B cell (primary cell): ENCODE measurements at regions of chr2 and their contacts with region 1.

Region 1: GRCh38 chr2:33529771-33530351 is 53.4 kb downstream of the RASGRP3 start:
- DNase-seq: peak; percentile 36
- ATAC-seq: peak; percentile 37
- H3K4me3 ChIP-seq: peak overlapping the region in 1 of 5 experiments; percentile 56
- H3K4me3 Mint-ChIP-seq: peak overlapping the region; percentile 72
- H3K27ac ChIP-seq: peak overlapping the region; percentile 98 to 99
- H3K27ac Mint-ChIP-seq: peak overlapping the region; percentile 95
- H3K4me1 ChIP-seq: peaks cover 72 to 77% of the 10 kb centered on the region in 2 donors
- H3K4me1 Mint-ChIP-seq: peaks cover 79% of the 10 kb centered on the region
- H3K27me3 ChIP-seq: no peaks in the 10 kb centered on the region
- H3K27me3 Mint-ChIP-seq: no peaks in the 10 kb centered on the region
- CTCF ChIP-seq: no peak

Region 2: DNA sequence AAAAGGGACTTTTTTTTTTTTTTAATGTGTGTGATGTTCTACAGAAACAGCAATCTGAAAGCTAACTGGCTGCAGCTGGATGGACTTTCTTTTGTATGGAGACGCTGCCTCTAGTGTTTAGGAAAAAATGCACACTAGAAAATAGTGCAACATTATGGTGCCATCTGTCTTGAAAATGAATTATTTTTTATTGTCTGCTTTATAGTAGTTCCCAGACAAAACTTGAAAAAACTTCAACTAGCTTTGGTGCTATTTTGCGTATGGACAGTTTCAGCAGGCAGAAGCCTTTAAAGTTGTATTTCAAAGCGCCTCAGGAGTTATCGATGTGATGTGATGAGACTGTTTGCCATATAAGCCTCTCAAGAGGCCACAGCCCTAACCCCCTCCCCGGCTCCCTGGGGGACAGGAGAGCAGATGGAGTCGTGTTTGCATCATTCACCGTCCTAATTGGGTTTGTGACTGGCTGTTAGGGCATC is 496.2 kb before region 1 on chr2:
- CTCF ChIA-PET with region 1: no interaction called
- POLR2A ChIA-PET with region 1: no interaction called
- intact Hi-C with region 1: no loop called
- DNase-seq: no peak
- ATAC-seq: no peak
- H3K4me3 ChIP-seq: no peak overlapping the region
- H3K4me3 Mint-ChIP-seq: no peak overlapping the region
- H3K27ac ChIP-seq: no peak overlapping the region
- H3K27ac Mint-ChIP-seq: no peak overlapping the region
- H3K4me1 ChIP-seq: no peaks in the 10 kb centered on the region
- H3K4me1 Mint-ChIP-seq: no peaks in the 10 kb centered on the region
- H3K27me3 ChIP-seq: no peaks in the 10 kb centered on the region
- H3K27me3 Mint-ChIP-seq: no peaks in the 10 kb centered on the region
- CTCF ChIP-seq: no peak

Region 3: DNA sequence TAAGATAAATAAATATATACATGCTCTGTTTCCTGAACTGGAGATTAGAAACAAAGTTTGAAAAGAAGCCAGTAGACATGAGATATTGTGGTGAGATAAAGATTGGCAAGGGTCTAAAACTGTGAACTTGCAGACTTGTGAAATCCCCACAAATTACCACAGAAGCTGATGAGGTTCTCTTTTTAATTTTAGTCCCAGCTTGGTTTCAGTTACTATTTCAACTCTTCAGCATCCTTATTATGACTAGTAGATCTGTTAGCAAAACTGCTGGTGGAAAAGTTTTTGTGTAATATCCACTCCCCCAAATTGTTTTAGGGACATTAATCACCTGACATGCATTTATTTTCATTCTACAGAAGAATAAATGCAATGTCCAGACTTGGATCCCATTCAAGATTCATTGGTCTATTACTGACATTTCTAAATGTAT is 32.6 kb before region 1 on chr2:
- CTCF ChIA-PET with region 1: no interaction called
- POLR2A ChIA-PET with region 1: interaction called, 3 read pairs
- intact Hi-C with region 1: loop called (anchors 2 kb)
- DNase-seq: peak; percentile 71
- ATAC-seq: peak; percentile 44
- H3K4me3 ChIP-seq: peak overlapping the region in 1 of 5 experiments; percentile 29
- H3K4me3 Mint-ChIP-seq: peak overlapping the region; percentile 65
- H3K27ac ChIP-seq: peak overlapping the region; percentile 73 to 85
- H3K27ac Mint-ChIP-seq: peak overlapping the region; percentile 84
- H3K4me1 ChIP-seq: peaks cover 89 to 92% of the 10 kb centered on the region in 2 donors
- H3K4me1 Mint-ChIP-seq: peaks cover 90% of the 10 kb centered on the region
- H3K27me3 ChIP-seq: no peaks in the 10 kb centered on the region
- H3K27me3 Mint-ChIP-seq: no peaks in the 10 kb centered on the region
- CTCF ChIP-seq: no peak